OCI-LY7 (cell line): ENCODE measurements at regions of chr2 and their contacts with region 1.

Region 1: GRCh38 chr2:226916669-226917068 is 80.8 kb downstream of the RHBDD1 start:
- DNase-seq: peak; percentile 79
- H3K4me3 ChIP-seq: peak overlapping the region; percentile 12
- H3K27ac ChIP-seq: peak overlapping the region; percentile 75
- H3K4me1 ChIP-seq: peaks cover 59% of the 10 kb centered on the region
- CTCF ChIP-seq: peak; percentile 21; the same call in 1 of the 2 replicates

Region 2: DNA sequence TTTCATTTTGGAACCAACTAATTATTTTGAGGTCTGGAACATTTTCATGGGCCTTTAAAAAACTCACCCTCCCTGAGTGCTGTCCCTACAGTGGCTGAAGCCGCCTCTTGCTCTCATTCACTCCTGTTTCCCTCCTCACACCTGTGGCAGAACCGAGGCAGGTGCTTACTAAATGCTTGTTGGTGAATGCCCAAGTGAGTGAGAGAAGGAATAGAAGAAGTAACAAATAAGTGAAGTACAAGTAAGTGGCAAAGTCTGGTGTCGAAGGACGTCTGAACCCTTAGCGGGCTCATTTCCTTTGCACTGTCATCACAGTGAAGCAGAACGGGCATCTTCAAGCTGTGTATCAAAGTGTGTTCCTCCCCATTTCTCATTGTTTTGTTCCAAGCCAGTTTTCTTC is 54.4 kb after region 1 on chr2:
- CTCF ChIA-PET with region 1: no interaction called
- POLR2A ChIA-PET with region 1: interaction called, 21 read pairs
- intact Hi-C with region 1: loop called (anchors 2 kb)
- DNase-seq: peak; percentile 77
- H3K4me3 ChIP-seq: peak overlapping the region; percentile 57
- H3K27ac ChIP-seq: peak overlapping the region; percentile 99
- H3K4me1 ChIP-seq: peaks cover 77% of the 10 kb centered on the region
- CTCF ChIP-seq: no peak